ENCODE measurements at regions of chr7 and their contacts with region 1.

Region 1: GRCh38 chr7:123871998-123872867 is 27.3 kb downstream of the HYAL4 start:
- DNase-seq: no peak
- H3K4me3 ChIP-seq: no peak overlapping the region
- H3K27me3 ChIP-seq: peaks cover 2% of the 10 kb centered on the region; the same call in 1 of the 2 replicates
- CTCF ChIP-seq: peak; percentile 39

Region 2: GRCh38 chr7:123494193-123494796 is 377.9 kb before region 1 on chr7:
- CTCF ChIA-PET with region 1: interaction called, 11 read pairs
- POLR2A ChIA-PET with region 1: no interaction called
- DNase-seq: no peak
- H3K4me3 ChIP-seq: no peak overlapping the region
- H3K27me3 ChIP-seq: no peaks in the 10 kb centered on the region
- CTCF ChIP-seq: peak; percentile 65

Region 3: DNA sequence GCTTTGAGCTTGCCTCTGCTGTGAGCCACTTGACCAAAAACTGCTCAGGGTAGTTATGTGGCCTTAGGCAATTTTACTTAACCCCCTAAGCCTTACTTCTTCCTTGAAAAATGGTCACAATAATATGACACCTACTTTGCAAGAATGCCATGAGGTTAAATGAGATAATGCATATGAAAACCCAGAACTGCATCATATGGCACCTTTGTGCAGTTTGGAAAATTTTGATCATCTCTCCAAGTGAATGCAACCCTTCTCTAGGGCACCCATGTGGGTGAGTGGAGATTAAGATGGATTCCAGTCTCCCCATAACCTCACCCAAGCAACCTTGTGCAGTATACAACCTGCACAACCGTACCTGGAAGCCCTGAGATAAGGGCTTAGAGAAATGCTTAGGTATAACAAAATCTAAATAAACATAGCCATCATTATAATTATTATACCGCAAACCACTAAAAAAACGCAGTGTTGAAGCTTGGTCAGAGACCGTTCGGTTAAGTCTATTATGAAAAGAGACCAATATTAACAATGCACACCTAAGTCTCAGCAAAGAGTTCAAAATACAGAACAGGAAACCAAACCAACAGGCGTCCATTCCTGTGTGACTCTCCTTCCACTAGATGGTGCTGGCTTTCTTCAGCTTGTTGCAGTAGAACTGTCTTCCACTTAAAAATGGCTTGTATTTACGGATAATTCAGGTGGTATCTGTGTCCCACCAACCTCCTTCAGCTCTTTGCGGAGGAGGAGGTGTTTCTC is 291.6 kb before region 1 on chr7:
- CTCF ChIA-PET with region 1: interaction called, 11 read pairs
- POLR2A ChIA-PET with region 1: no interaction called
- DNase-seq: no peak
- H3K4me3 ChIP-seq: no peak overlapping the region
- H3K27me3 ChIP-seq: no peaks in the 10 kb centered on the region; the same call in 1 of the 2 replicates
- CTCF ChIP-seq: peak; percentile 87

Region 4: DNA sequence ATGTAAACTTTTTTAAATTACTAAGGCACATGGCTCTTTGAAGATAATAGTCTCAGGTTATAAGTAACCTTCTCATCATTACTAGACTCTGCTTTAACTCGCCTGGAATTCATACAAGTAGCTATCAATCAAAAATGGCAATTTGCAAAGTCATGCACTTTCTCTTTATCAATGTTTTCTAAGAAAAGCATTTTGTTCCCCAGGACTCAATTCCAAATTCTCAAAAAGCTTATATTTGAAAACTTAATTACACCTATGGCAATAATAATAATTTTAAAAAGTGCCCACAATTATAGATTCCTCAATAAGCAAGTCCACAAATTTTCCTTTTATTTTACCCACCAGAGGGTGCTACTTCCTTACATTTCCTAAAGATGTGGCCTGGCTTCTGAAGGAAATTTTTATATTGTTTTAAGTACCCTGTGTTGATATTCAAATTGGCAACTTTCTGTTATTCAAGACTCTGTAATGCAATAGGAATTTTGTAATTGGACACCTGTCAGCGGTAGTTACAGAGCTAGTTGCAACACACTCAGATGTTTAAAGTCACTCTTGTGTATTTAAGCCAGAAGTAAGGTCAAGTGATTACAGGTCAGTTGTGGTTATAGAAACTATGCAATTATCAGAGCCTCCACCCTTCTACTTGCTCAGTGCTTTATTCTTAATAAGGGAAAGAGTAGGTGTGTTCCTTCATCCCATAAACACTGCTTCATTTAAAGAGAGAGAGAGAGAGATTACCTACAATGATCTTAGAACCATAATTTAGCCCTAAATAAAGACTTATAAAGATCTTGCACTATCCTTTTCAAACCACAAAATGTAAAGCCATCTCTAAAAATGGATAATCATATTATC is 74.3 kb before region 1 on chr7:
- CTCF ChIA-PET with region 1: interaction called, 21 read pairs
- POLR2A ChIA-PET with region 1: no interaction called
- DNase-seq: peak; percentile 59
- H3K4me3 ChIP-seq: no peak overlapping the region
- H3K27me3 ChIP-seq: no peaks in the 10 kb centered on the region
- CTCF ChIP-seq: peak; percentile 49

Region 5: GRCh38 chr7:123941391-123942180 is 69.4 kb after region 1 on chr7:
- CTCF ChIA-PET with region 1: no interaction called
- POLR2A ChIA-PET with region 1: no interaction called
- DNase-seq: no peak
- H3K4me3 ChIP-seq: no peak overlapping the region
- H3K27me3 ChIP-seq: no peaks in the 10 kb centered on the region
- CTCF ChIP-seq: no peak